ENCODE measurements at regions of chr18 and their contacts with region 1.

Region 1: DNA sequence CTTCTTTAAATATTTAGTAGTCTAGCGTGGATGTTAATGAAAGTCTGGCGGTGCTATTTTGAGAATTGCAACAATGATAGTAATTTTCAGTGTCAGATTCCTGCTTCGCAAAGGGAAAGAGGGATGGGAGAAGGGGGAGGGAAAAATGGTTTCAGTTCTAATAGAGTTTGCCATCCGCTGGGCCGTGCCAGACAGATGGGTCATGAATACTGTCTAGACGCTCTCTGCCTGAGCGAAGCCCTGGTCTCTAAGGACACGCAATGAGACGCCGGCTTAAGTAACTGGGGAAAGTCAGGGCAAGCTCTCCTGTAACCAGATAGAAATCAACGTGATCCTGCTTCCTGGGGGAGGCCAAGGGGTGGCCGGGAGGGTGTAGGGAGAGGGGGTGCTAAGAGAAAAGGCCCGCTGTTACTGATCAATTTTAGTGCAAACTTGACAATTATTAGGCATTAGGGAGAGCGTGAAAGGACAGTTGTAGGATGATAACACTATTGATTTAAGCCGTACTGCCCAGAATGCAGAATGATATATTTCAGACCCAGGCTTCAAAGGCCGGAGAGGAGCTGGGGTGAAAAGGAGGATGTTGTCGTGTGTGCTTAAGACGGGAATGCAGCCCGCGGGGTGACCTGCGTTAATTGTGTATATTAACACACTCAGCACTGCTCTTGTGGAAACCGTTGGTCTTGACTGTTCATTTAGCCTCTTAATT is 229.2 kb downstream of the LDLRAD4 start:
- DNase-seq: peak in 2 of 10 donors; percentile 35 to 44

Region 2: GRCh38 chr18:13435596-13436327 is 12.0 kb before region 1 on chr18:
- intact Hi-C with region 1: no loop called
- DNase-seq: no peak

Region 3: DNA sequence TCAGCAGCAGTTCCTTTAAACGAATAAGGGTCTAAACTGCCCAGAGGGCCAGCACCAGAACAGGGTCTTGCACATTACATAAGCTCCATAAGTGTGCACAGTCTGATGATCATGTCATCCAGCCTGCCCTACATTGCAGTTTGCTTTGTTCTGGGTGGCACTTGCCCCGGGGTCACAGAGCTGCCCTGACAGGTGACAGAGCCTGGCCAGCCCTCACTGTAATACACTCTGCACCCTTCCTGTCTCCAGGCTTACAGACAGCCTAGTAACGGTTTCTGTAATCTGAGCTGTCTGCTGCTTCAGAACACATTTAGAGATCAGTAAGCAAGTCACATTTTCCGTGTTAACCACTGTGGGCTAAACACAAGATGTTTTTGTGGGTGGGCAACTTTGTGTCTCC is 65.2 kb after region 1 on chr18:
- intact Hi-C with region 1: no loop called
- DNase-seq: no peak

Region 4: DNA sequence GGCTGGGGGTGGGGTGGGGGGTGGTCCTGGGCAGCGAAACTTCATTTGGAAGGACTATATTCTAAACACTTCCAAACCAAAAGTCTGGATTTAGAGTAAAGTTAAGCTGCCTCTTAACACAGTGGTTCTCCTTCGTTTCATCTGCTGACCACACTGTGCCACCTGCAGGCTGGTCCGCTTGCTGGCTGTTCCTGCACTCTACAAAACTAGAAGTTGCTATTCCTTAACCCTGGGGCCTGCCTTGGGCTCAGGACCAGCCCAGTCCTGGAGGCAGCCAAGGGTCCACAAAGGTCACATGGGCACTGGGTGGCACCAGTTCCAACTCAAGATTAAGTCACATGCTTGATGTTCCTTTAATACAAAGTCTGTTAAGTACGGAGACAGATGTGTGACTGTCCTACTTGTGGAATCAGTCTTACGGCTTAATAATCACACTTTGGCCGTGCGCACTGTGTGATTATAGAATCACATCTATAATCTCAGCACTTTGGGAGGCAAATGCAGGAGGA is 83.2 kb after region 1 on chr18:
- intact Hi-C with region 1: loop called (anchors 5 kb)
- DNase-seq: peak; percentile 40 to 95 (median 71)

Measured in posterior cingulate gyrus (tissue), 11 donors.